Natural killer cell (primary cell): ENCODE measurements at regions of chr6 and their contacts with region 1.

Region 1: DNA sequence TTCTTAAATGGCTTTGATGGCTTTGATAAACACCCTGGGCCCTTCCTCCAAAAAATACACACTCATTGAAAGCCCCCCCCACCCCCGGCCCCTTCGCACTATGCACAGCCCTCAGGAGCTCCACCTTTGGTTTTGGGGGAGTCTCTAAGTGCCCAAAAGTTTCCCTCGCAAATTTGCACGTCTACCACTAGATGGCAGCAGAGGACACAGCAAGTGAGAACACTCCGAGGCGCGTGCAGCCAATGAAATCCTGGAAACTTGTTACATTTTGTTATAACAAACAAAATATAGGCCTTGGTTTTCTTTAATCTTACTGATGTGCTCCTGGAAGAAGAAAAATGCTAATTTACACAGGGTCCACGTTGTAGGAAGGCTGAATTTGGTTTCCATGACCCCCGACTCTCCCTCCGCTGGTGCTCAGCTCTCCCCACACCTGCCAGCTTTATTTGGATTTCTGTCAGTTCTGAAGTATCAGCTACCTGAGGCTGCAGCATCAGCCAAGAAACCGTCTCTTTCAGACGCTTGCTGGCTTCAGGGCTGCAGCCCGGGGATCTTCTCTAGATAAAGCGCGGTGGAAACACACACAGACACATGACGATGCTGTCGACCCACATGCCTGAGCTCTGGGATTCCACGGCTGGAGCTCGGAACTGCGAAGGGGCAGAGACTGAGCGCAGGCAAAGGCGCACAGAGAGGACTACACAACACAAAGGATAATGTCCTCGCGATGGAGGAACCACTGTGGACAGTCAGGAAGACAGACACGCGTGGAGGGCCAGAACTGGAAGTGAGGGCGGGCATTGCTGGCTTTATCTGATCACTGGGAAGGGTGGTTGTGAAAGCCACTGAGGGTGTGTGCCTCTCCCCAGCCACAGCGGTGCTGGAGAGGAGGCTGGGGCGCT is 148.4 kb upstream of the RPS6KA2 start:
- DNase-seq: peak; percentile 29 to 91
- ATAC-seq: peak; percentile 81 to 94 (median 86)
- H3K4me3 ChIP-seq: no peak overlapping the region
- H3K4me3 Mint-ChIP-seq: no peak overlapping the region
- H3K27ac ChIP-seq: no peak overlapping the region
- H3K27ac Mint-ChIP-seq: no peak overlapping the region
- H3K4me1 ChIP-seq: peaks cover 12% of the 10 kb centered on the region
- H3K4me1 Mint-ChIP-seq: peaks cover 5% of the 10 kb centered on the region in 2 donors
- H3K27me3 ChIP-seq: no peaks in the 10 kb centered on the region
- H3K27me3 Mint-ChIP-seq: peaks cover 9 to 46% of the 10 kb centered on the region in 2 donors
- CTCF ChIP-seq: peak; percentile 83

Region 2: GRCh38 chr6:166499350-166500163 is 275.9 kb before region 1 on chr6:
- intact Hi-C with region 1: no loop called
- DNase-seq: no peak
- ATAC-seq: no peak
- H3K4me3 ChIP-seq: no peak overlapping the region
- H3K4me3 Mint-ChIP-seq: no peak overlapping the region
- H3K27ac ChIP-seq: no peak overlapping the region
- H3K27ac Mint-ChIP-seq: no peak overlapping the region
- H3K4me1 ChIP-seq: no peaks in the 10 kb centered on the region
- H3K4me1 Mint-ChIP-seq: no peaks in the 10 kb centered on the region
- H3K27me3 ChIP-seq: no peaks in the 10 kb centered on the region
- H3K27me3 Mint-ChIP-seq: no peaks in the 10 kb centered on the region
- CTCF ChIP-seq: no peak

Region 3: GRCh38 chr6:166989427-166990032 is 214.1 kb after region 1 on chr6:
- intact Hi-C with region 1: loop called (anchors 1 kb)
- DNase-seq: peak in 1 of 2 donors; percentile 78
- ATAC-seq: peak; percentile 76 to 81 (median 79)
- H3K4me3 ChIP-seq: no peak overlapping the region
- H3K4me3 Mint-ChIP-seq: no peak overlapping the region
- H3K27ac ChIP-seq: no peak overlapping the region
- H3K27ac Mint-ChIP-seq: no peak overlapping the region
- H3K4me1 ChIP-seq: no peaks in the 10 kb centered on the region
- H3K4me1 Mint-ChIP-seq: peaks cover 9 to 32% of the 10 kb centered on the region in 2 donors
- H3K27me3 ChIP-seq: no peaks in the 10 kb centered on the region
- H3K27me3 Mint-ChIP-seq: no peaks in the 10 kb centered on the region
- CTCF ChIP-seq: peak; percentile 63

Region 4: GRCh38 chr6:167141667-167142432 is 366.4 kb after region 1 on chr6:
- intact Hi-C with region 1: loop called (anchors 5 kb)
- DNase-seq: peak in 1 of 2 donors; percentile 75
- ATAC-seq: peak in 2 of 3 donors; percentile 57 to 72
- H3K4me3 ChIP-seq: no peak overlapping the region
- H3K4me3 Mint-ChIP-seq: no peak overlapping the region
- H3K27ac ChIP-seq: no peak overlapping the region
- H3K27ac Mint-ChIP-seq: no peak overlapping the region
- H3K4me1 ChIP-seq: peaks cover 23% of the 10 kb centered on the region
- H3K4me1 Mint-ChIP-seq: peaks cover 16% of the 10 kb centered on the region in 2 donors
- H3K27me3 ChIP-seq: no peaks in the 10 kb centered on the region
- H3K27me3 Mint-ChIP-seq: peaks cover 25 to 43% of the 10 kb centered on the region in 2 donors
- CTCF ChIP-seq: peak; percentile 51

Region 5: GRCh38 chr6:167291623-167292300 is 516.3 kb after region 1 on chr6:
- intact Hi-C with region 1: loop called (anchors 5 kb)
- DNase-seq: no peak
- ATAC-seq: no peak
- H3K4me3 ChIP-seq: no peak overlapping the region
- H3K4me3 Mint-ChIP-seq: no peak overlapping the region
- H3K27ac ChIP-seq: no peak overlapping the region
- H3K27ac Mint-ChIP-seq: no peak overlapping the region
- H3K4me1 ChIP-seq: no peaks in the 10 kb centered on the region
- H3K4me1 Mint-ChIP-seq: no peaks in the 10 kb centered on the region
- H3K27me3 ChIP-seq: no peaks in the 10 kb centered on the region
- H3K27me3 Mint-ChIP-seq: peaks cover 0 to 11% of the 10 kb centered on the region in 2 donors
- CTCF ChIP-seq: no peak